ENCODE measurements at regions of chr17 and their contacts with region 1.

Region 1: DNA sequence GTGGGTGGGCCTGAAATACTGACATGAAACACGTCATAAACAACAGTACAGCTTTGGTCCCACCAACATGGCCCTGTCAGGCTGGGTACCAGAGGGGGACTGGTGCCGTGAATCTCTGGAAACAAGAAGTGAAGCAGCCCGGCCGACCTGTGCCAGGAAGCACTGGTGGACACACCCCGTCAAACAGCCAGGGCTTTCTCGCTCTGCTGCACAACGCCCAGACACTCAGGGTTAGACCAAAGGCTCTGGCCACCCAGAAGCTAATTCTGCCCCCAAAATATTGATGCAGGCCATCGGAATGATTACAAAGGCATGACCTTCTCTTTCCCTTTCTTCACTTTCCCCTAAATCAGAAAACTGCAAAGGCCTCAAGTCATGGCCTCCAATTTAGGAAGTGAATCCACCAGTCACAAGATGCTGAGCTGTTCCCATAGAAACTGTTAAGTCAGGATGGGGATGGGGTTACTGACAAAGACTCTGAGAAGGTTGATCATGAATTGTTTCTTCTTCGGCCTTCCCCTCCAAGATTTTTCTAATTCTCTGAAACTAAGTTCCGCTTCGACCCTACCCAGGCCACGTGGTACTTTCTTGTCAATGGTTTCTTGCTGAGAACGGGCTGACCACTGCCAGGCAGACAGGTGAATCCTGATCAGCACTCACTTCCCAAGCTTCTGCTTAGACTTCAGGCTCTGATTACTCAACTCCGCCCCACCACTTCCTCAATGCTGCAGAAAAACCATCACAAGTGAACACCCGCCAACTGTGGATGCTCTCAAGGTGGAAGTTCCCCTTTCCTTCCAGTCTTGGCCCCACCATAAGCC is 6.7 kb downstream of the PITPNA start:
- DNase-seq: peak; percentile 43
- ATAC-seq: peak; percentile 81
- H3K4me3 ChIP-seq: no peak overlapping the region
- H3K27ac ChIP-seq: peak overlapping the region; percentile 69
- H3K4me1 ChIP-seq: peaks cover 40% of the 10 kb centered on the region
- H3K27me3 ChIP-seq: no peaks in the 10 kb centered on the region
- CTCF ChIP-seq: no peak
- EP300 ChIP-seq: peak in 1 of 2 experiments; percentile 20; a peak in 1 of 4 replicates
- POLR2A ChIP-seq: no peak
- RAD21 ChIP-seq: no peak

Region 2: GRCh38 chr17:1488030-1488863 is 67.6 kb before region 1 on chr17:
- CTCF ChIA-PET with region 1: no interaction called
- POLR2A ChIA-PET with region 1: no interaction called
- RAD21 ChIA-PET with region 1: no interaction called
- SMC1A ChIA-PET with region 1: no interaction called
- in situ Hi-C with region 1: no loop called
- intact Hi-C with region 1: no loop called
- DNase-seq: no peak
- ATAC-seq: peak; percentile 53
- H3K4me3 ChIP-seq: peak overlapping the region; percentile 68
- H3K27ac ChIP-seq: peak overlapping the region; percentile 84
- H3K4me1 ChIP-seq: peaks cover 22% of the 10 kb centered on the region
- H3K27me3 ChIP-seq: no peaks in the 10 kb centered on the region
- CTCF ChIP-seq: no peak
- EP300 ChIP-seq: no peak
- POLR2A ChIP-seq: no peak
- RAD21 ChIP-seq: no peak

Region 3: DNA sequence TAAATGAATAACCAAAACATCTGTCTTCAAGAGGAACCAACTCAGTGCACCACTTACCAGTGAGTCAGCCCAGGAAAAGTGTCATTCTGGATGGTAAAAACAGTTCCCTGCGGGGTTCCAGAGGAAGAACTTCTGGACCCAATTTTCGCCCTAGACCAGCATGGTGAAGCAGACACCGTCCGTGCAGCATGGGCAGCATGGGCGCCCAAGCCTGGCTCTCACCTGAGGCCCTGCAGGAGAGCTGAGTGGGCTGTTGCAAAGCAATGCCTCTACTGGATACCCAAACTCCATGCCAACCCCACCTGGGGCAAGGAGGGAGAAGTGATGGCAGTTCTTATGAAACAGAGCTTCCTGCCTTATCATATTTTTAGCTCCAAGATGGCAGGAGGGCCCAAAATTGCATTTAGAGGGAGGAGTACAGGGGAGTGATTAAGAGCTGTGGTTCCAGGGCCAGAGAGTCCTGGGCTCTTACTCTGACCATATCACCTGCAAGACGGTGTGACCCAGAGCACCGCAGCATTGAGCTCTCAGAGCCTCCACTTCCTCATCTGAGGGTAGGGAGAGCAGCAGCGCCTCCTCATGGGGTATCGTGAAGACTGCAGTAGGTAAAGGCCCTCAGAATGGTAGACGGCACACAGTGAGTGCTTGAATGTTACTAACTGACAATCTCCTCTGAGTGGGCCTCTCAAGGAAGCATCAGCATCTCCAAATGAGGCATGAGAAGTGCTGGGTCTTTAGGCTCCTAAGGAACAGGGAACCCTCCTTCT is 22.8 kb before region 1 on chr17:
- CTCF ChIA-PET with region 1: interaction called, 12 read pairs
- POLR2A ChIA-PET with region 1: interaction called, 5 read pairs
- RAD21 ChIA-PET with region 1: no interaction called
- SMC1A ChIA-PET with region 1: interaction called, 4 read pairs
- in situ Hi-C with region 1: no loop called
- intact Hi-C with region 1: no loop called
- DNase-seq: no peak
- ATAC-seq: peak; percentile 86
- H3K4me3 ChIP-seq: no peak overlapping the region
- H3K27ac ChIP-seq: no peak overlapping the region
- H3K4me1 ChIP-seq: no peaks in the 10 kb centered on the region
- H3K27me3 ChIP-seq: no peaks in the 10 kb centered on the region
- CTCF ChIP-seq: peak; percentile 45 to 63 (median 57); a peak in 5 of 6 replicates
- EP300 ChIP-seq: no peak
- POLR2A ChIP-seq: no peak
- RAD21 ChIP-seq: peak; percentile 50

Measured in GM12878 (cell line).